ENCODE measurements at regions of chr1 and their contacts with region 1.

Region 1: DNA sequence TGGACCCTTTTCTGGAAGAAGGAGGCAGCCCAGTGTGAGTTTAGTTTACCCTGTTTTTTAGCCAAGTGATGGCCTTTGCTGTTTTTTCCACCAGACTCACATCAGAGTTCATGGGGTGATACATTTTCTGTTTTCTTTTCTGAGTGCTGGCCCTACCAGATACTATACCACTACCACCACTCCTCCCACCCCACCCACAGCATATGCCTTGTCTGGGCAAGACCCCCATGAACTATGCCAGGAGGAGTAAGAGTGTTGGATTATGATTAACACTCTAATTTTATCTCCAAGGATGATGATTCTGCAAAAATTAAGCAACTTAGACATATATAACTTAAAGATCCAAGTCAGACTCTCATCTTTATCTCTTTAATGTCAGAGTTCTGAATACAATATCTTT is 26.1 kb downstream of the FABP3 start:
- DNase-seq: no peak
- H3K4me3 ChIP-seq: no peak overlapping the region
- H3K27ac ChIP-seq: no peak overlapping the region
- H3K4me1 ChIP-seq: no peaks in the 10 kb centered on the region
- H3K27me3 ChIP-seq: no peaks in the 10 kb centered on the region
- CTCF ChIP-seq: no peak

Region 2: DNA sequence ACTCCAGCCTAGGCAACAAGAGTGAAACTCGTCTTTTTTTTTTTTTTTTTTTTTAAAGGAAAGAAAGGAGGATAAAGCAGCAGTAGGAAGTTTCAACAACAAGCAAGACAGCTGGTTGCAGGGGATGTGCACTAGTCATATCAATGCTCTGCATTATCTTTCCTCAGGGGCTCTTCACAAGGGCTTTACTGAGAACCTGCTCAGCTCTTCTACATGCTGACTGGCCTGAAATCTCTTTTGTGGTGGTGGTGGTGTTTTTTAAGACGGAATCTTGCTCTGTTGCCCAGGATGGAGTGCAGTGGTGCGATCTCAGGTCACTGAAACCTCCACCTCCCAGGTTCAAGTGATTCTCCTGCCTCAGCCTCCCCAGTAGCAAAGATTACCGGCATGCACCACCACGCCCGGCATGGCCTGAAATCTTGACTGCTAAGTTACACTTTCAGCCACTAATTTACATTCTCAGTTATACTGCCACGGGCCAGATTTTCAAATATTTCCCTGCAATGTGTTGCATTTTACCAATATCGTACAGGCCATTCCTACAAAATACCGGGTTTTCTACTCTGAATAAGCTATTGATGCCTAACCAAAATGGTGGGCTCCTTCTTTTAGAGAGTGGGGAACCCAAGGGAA is 349.2 kb before region 1 on chr1:
- CTCF ChIA-PET with region 1: no interaction called
- POLR2A ChIA-PET with region 1: interaction called, 11 read pairs
- intact Hi-C with region 1: no loop called
- DNase-seq: no peak
- H3K4me3 ChIP-seq: no peak overlapping the region
- H3K27ac ChIP-seq: no peak overlapping the region
- H3K4me1 ChIP-seq: no peaks in the 10 kb centered on the region
- H3K27me3 ChIP-seq: no peaks in the 10 kb centered on the region
- CTCF ChIP-seq: no peak

Region 3: GRCh38 chr1:31010086-31010989 is 336.4 kb before region 1 on chr1:
- CTCF ChIA-PET with region 1: no interaction called
- POLR2A ChIA-PET with region 1: no interaction called
- intact Hi-C with region 1: no loop called
- DNase-seq: no peak
- H3K4me3 ChIP-seq: no peak overlapping the region
- H3K27ac ChIP-seq: no peak overlapping the region
- H3K4me1 ChIP-seq: peaks cover 11% of the 10 kb centered on the region; the same call in 1 of the 2 replicates
- H3K27me3 ChIP-seq: no peaks in the 10 kb centered on the region
- CTCF ChIP-seq: no peak

Measured in PC-9 (cell line).